ENCODE measurements at regions of chr11 and their contacts with region 1.

Region 1: DNA sequence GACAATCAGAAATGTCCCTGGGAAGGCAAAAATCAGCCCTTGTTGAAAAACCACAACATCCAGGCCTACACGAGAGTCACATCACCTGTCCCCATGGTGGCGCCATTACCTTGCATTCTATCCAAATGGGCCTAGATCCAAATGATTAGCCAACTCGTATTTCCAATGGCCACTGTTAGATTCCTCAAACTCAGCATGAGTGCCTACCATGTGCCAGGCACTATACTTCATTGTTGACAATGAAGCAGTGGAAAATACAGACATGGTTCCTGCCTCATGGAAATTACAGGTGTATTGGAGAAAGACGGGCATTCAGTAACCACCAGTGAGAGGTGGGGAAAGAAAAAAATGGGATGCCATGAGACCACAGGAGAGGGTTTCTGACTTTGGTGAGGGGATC is 29.8 kb upstream of the CREB3L1 start:
- DNase-seq: peak in 1 of 3 donors; percentile 62
- ATAC-seq: peak; percentile 55 to 64 (median 58)
- H3K4me3 ChIP-seq: no peak overlapping the region
- H3K27ac ChIP-seq: no peak overlapping the region
- H3K4me1 ChIP-seq: peaks cover 0 to 5% (median 2%) of the 10 kb centered on the region in 4 donors
- H3K27me3 ChIP-seq: no peaks in the 10 kb centered on the region
- CTCF ChIP-seq: peak; percentile 45 to 69 (median 47)
- POLR2A ChIP-seq: no peak

Region 2: DNA sequence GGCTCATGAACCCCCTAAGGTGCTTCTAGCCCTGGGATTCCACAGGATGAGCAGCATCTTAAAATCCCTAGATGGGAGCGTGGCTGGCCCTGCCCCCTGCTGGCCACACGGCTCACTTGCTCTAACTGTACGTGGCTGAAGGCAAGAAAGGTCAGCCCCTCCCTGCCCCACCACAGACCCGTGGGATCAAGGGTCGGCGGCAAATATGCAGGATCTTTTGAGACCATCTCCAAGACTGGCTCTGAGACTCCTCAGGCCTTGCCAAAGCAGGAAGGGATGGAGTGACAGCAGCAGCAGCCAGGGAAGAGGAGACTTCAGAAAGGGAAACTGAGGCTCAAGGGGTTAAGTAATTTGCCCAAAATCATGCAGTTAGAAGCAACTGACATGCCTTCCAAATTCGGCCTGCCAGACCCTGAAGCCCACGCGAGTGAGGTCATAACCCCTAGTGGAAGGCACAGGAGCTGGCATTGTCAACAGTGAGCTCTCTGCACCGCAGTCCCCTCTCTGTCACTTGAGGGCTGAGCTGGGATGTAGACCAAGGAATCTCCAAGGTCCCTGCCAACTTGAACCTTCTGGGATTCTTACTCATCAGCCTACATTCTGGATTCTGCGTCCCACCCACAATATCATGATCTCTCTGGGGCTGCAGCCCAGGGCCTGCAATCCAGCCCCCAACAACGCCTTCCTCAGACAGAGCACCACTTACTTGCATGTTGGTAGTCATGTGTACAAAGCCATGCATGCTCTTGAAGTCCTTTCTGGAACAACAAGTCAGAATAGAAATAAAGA is 61.2 kb after region 1 on chr11:
- intact Hi-C with region 1: loop called (anchors 5 kb)
- DNase-seq: peak; percentile 73 to 80 (median 76)
- ATAC-seq: peak; percentile 84 to 96 (median 92)
- H3K4me3 ChIP-seq: no peak overlapping the region
- H3K27ac ChIP-seq: no peak overlapping the region
- H3K4me1 ChIP-seq: no peaks in the 10 kb centered on the region
- H3K27me3 ChIP-seq: no peaks in the 10 kb centered on the region
- CTCF ChIP-seq: peak; percentile 84 to 92 (median 86)
- POLR2A ChIP-seq: no peak

Region 3: DNA sequence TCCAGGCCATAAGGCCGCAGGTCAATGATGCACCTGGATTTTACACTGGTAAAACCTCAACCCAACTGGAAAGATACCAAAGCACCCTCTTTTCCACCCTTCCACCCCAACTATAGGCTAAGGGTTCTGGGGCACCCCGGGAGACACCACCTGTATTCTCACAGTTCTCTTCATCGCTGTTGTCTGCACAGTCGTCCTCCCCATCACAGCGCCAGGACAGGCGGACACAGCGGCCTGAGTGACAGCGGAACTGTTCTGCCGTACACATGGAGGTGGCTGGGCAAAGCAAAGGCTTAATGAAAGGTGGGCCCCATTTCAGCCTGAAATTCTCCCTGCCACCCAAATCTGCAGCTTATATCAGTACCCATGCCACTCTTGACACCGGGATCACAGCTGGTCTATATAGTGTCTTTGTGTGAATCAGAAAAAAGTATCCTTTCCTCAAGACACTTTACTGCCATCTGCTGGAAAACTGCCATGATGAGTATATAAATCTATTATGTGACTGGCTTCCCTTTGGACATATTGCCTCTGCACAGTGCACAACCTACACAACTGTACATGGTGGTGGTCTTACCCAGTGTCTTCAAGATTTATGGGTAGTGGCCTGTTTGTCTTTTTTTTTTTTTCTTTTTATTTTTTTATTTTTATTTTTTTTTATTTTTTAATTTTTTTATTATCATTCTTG is 649.2 kb after region 1 on chr11:
- intact Hi-C with region 1: no loop called
- DNase-seq: no peak
- ATAC-seq: no peak
- H3K4me3 ChIP-seq: no peak overlapping the region
- H3K27ac ChIP-seq: no peak overlapping the region
- H3K4me1 ChIP-seq: peaks cover 0 to 4% (median 0%) of the 10 kb centered on the region in 4 donors
- H3K27me3 ChIP-seq: no peaks in the 10 kb centered on the region
- CTCF ChIP-seq: peak in 2 of 4 donors; percentile 8 to 10
- POLR2A ChIP-seq: no peak